Breast epithelium (tissue), 4 donors: ENCODE measurements at regions of chr18 and their contacts with region 1.

Region 1: GRCh38 chr18:79378542-79379250 is 17.0 kb upstream of the NFATC1 start:
- DNase-seq: peak; percentile 70 to 91
- H3K4me3 ChIP-seq: no peak overlapping the region
- H3K27ac ChIP-seq: no peak overlapping the region
- H3K4me1 ChIP-seq: peaks cover 0 to 4% of the 10 kb centered on the region in 2 donors
- H3K27me3 ChIP-seq: no peaks in the 10 kb centered on the region
- CTCF ChIP-seq: peak; percentile 84 to 96 (median 94)
- POLR2A ChIP-seq: no peak

Region 2: DNA sequence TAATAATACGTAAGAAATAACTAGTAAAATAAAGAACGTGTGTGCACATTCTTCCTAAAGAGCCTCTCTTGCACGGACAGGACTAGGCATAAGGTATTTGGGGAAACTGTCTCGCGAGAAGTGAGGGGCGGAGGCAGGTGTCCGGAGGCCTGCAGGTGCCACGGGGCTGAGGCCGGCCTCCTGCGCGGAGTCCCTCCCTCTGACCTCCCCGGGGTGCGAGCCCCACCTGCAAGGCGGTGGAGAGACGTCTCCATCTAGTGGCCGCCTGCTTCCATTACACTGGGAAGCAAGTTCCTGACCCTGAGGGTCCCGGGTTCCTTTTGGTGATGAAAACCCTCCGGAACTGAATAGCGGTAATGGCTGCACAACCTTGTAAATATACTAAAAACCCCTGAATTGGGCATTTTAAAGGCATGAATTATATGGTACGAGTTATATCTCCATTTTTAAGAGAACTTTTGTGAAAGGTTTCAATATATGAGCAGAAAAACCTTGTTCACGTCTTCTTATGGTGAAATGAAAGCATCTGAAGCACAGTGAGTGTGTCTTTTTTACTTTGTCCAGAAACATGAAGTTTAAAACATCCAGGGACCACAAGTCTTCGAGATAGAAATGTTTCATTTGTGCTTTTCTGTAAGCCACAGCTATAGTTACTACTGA is 265.4 kb after region 1 on chr18:
- intact Hi-C with region 1: loop called (anchors 10 kb)
- DNase-seq: no peak
- H3K4me3 ChIP-seq: no peak overlapping the region
- H3K27ac ChIP-seq: no peak overlapping the region
- H3K4me1 ChIP-seq: no peaks in the 10 kb centered on the region
- H3K27me3 ChIP-seq: peaks cover 0 to 15% of the 10 kb centered on the region in 2 donors
- CTCF ChIP-seq: peak; percentile 82 to 94 (median 90)
- POLR2A ChIP-seq: no peak